ENCODE measurements at regions of chr16 and their contacts with region 1.

Region 1: GRCh38 chr16:58336332-58337089 is 41.7 kb upstream of the PRSS54 start:
- H3K4me3 Mint-ChIP-seq: peak overlapping the region; percentile 23
- H3K27ac Mint-ChIP-seq: no peak overlapping the region
- H3K4me1 Mint-ChIP-seq: peaks cover 5% of the 10 kb centered on the region
- H3K27me3 Mint-ChIP-seq: peaks cover 4% of the 10 kb centered on the region

Region 2: GRCh38 chr16:58392215-58393137 is 56.0 kb after region 1 on chr16 and contains the start of gene GINS3:
- intact Hi-C with region 1: no loop called
- H3K4me3 Mint-ChIP-seq: peak within 1 kb of the TSS; percentile 94
- H3K27ac Mint-ChIP-seq: peak within 1 kb of the TSS; percentile 90
- H3K4me1 Mint-ChIP-seq: peaks cover 6% of the 10 kb centered on the region
- H3K27me3 Mint-ChIP-seq: peaks cover 17% of the 10 kb centered on the region

Region 3: DNA sequence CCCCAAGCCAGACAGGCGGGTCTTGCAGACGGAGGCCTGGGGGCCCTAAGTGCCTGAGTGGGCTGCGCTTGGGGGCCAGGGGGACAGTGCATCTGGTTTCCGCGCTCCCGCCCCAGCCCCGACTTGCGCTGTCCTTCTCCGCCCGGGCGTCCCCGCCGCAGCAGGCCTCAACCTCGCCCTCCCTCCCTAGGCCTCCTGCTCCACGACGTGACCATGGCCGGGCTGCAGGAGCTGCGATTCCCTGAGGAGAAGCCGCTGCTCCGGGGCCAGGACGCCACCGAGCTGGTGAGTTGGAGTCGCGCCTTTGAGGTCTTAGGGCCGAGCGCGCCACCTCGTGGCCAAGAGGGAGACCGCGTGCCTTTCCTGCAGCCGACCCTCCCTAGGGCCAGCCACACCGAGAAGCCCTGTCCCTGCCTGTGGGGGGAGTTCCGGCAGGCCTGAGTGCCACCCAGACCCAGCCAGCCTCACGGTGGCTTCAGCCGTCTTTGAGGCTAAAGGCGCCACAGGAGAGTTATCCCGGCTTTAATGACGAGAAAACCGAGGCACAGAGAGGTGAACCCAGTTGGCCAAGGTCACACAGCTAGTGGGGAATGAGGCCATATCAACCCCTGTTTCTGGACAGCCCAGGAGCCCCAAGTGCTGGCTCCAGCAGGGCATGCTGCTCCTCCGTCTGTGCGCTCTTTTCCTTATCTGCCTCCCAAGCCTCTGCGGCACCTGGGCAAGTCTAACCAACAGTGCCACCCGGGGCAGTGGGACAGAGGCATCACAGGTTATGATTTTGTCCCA is 151.2 kb after region 1 on chr16:
- intact Hi-C with region 1: loop called (anchors 1 kb)
- H3K4me3 Mint-ChIP-seq: no peak overlapping the region
- H3K27ac Mint-ChIP-seq: no peak overlapping the region
- H3K4me1 Mint-ChIP-seq: no peaks in the 10 kb centered on the region
- H3K27me3 Mint-ChIP-seq: peaks cover 27% of the 10 kb centered on the region

Region 4: GRCh38 chr16:58556678-58557077 is 220.2 kb after region 1 on chr16:
- intact Hi-C with region 1: no loop called
- H3K4me3 Mint-ChIP-seq: no peak overlapping the region
- H3K27ac Mint-ChIP-seq: no peak overlapping the region
- H3K4me1 Mint-ChIP-seq: no peaks in the 10 kb centered on the region
- H3K27me3 Mint-ChIP-seq: no peaks in the 10 kb centered on the region

Region 5: DNA sequence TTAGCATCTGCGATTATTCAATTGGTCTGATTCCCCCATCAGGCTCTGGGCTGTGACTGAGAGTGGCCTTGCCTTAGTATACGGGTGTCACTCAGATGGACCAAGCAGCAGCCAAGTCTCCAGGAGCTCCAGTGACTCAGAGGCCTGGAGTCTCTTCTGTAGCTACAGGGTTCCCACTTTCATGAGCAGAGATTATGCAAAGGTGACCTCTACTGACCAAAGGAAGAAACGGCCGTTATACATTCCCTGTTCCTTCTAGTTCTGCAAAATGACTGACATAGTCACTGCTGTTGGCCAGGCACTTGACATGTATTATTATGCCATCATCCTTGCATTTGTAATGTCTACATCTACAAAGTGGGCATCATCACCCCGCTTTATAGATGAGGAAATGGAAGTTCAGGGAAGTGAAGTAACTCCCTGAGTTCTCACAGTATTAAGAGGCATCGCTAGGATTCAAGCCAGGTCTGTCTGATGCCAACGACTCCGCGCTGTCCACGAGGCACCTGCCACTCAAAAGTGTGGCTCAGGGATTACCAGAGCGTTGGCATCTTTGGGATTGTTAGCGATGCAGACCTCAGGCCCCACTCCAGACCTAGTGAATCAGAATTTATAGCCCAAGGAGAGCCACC is 324.8 kb after region 1 on chr16:
- intact Hi-C with region 1: loop called (anchors 10 kb)
- H3K4me3 Mint-ChIP-seq: no peak overlapping the region
- H3K27ac Mint-ChIP-seq: no peak overlapping the region
- H3K4me1 Mint-ChIP-seq: peaks cover 10% of the 10 kb centered on the region
- H3K27me3 Mint-ChIP-seq: no peaks in the 10 kb centered on the region

Measured in dendritic cell treated with granulocyte-macrophage colony-stimulating factor and Interleukin-4, amounts not matched to agents 40 ng/mL and 50 ng/mL, for 4 days (primary cell).